HAP-1 (cell line): ENCODE measurements at regions of chr1 and their contacts with region 1.

Region 1: GRCh38 chr1:99707535-99708142 is 58.8 kb downstream of the FRRS1 start:
- DNase-seq: peak; percentile 65 to 81
- H3K4me3 ChIP-seq: no peak overlapping the region
- H3K4me1 ChIP-seq: no peaks in the 10 kb centered on the region
- H3K27me3 ChIP-seq: no peaks in the 10 kb centered on the region

Region 2: DNA sequence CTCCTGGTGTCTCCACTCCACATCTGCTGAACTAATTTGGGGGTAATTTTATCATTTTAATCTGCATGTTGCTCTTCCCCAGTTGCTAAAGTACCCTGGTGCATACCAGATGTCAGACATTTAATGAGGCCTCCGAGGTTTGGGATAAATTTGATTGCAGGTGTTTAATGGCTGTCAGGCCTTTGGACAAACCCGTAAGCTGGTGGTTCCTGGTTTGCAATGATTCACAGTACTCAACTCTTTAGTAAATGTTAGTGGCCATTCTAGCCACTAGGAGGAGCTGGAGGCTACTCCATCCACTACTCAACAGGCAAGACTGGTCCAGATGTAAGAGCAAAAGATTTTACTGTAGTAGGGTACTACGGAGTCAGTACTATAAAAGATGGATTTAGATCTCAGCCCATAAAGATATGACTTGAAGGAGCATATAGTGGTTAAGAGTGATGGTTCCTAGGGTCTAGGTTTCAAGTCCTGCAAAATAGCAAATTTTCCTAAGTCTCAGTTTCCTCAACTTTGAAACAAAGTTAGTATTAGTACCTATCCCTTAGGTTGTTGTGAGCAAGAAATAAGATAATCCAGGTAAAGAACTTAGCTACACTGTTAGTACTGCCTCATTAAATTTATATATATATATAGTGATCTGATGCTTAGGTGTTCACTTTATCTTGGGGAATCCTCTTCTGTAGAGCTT is 913.3 kb before region 1 on chr1:
- in situ Hi-C with region 1: loop called (anchors 25 kb)
- DNase-seq: peak; percentile 50 to 53
- H3K4me3 ChIP-seq: no peak overlapping the region
- H3K4me1 ChIP-seq: no peaks in the 10 kb centered on the region
- H3K27me3 ChIP-seq: no peaks in the 10 kb centered on the region

Region 3: DNA sequence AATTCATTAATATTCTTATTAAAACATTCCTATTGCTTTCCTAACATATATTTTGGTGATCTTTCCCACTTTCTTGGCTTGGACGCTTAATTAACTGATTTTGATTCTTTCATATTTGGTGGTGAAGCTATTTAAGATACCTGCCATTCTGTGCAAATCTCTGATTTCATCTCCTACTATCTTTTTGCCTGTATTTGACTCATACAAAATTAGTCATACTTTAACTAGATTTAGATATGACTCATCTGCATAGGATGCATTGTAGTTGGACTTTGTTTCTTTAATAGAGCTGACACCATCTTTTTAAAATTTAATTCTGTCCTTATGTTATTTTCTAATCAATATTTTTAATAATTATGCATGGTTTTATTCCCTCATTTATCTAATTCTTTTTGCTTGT is 537.1 kb before region 1 on chr1:
- in situ Hi-C with region 1: loop called (anchors 10 kb)
- DNase-seq: no peak
- H3K4me3 ChIP-seq: no peak overlapping the region
- H3K4me1 ChIP-seq: no peaks in the 10 kb centered on the region
- H3K27me3 ChIP-seq: no peaks in the 10 kb centered on the region

Region 4: DNA sequence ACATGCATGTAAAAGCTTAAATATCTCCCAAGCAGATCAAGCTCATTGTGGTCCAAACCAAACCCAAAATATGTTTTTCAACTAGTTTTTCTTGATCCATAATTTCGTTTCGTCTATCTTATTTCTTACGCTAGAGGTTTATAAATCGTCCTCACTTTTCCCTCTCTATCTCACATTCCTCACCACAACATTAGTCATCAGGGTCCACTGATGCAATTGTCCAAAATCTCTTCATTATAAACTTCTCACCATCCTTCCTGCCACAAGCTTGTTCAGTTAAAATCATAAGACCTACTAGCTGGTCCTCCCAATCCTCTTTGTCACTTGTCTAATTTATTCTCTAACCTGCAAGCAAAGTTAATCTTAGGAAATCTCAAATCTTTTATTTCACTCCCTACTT is 234.7 kb before region 1 on chr1:
- in situ Hi-C with region 1: no loop called
- DNase-seq: no peak
- H3K4me3 ChIP-seq: no peak overlapping the region
- H3K4me1 ChIP-seq: peaks cover 16% of the 10 kb centered on the region
- H3K27me3 ChIP-seq: no peaks in the 10 kb centered on the region